ENCODE measurements at regions of chr22 and their contacts with region 1.

Region 1: GRCh38 chr22:36052505-36053270 is 24.1 kb upstream of the RBFOX2 start:
- DNase-seq: no peak
- ATAC-seq: peak; percentile 70; the same call in 1 of the 2 replicates
- H3K4me3 ChIP-seq: no peak overlapping the region
- H3K27ac ChIP-seq: no peak overlapping the region
- H3K4me1 ChIP-seq: no peaks in the 10 kb centered on the region; the same call in 1 of the 2 replicates
- H3K27me3 ChIP-seq: no peaks in the 10 kb centered on the region
- CTCF ChIP-seq: no peak

Region 2: GRCh38 chr22:36010882-36011281 is 41.8 kb before region 1 on chr22:
- CTCF ChIA-PET with region 1: no interaction called
- POLR2A ChIA-PET with region 1: no interaction called
- in situ Hi-C with region 1: no loop called
- intact Hi-C with region 1: no loop called
- DNase-seq: no peak
- ATAC-seq: no peak
- H3K4me3 ChIP-seq: no peak overlapping the region
- H3K27ac ChIP-seq: no peak overlapping the region
- H3K4me1 ChIP-seq: peaks cover 4% of the 10 kb centered on the region; the same call in 1 of the 2 replicates
- H3K27me3 ChIP-seq: no peaks in the 10 kb centered on the region
- CTCF ChIP-seq: no peak

Region 3: DNA sequence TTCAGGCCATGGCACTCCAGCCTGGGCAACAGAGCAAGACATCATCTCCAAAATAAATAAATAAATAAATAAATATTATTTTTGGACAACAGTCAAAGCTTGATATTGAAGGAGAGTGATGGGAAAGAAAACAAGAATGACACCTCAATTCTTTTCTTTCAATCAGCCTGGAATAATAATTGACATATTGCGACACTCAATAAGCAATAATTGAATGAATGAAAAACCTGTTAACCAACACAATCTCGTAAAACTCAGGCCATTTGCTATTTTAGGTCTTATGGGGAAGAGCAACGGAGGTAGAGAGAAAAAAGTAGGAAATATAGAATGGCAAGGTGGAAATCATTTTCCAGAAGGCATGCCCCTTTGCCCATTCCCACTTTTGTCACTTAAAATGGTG is 13.6 kb before region 1 on chr22:
- CTCF ChIA-PET with region 1: no interaction called
- POLR2A ChIA-PET with region 1: interaction called, 14 read pairs
- in situ Hi-C with region 1: no loop called
- intact Hi-C with region 1: no loop called
- DNase-seq: no peak
- ATAC-seq: no peak
- H3K4me3 ChIP-seq: no peak overlapping the region
- H3K27ac ChIP-seq: no peak overlapping the region
- H3K4me1 ChIP-seq: no peaks in the 10 kb centered on the region
- H3K27me3 ChIP-seq: no peaks in the 10 kb centered on the region
- CTCF ChIP-seq: no peak

Measured in Panc1 (cell line).